ENCODE measurements at regions of chrX and their contacts with region 1.

Region 1: DNA sequence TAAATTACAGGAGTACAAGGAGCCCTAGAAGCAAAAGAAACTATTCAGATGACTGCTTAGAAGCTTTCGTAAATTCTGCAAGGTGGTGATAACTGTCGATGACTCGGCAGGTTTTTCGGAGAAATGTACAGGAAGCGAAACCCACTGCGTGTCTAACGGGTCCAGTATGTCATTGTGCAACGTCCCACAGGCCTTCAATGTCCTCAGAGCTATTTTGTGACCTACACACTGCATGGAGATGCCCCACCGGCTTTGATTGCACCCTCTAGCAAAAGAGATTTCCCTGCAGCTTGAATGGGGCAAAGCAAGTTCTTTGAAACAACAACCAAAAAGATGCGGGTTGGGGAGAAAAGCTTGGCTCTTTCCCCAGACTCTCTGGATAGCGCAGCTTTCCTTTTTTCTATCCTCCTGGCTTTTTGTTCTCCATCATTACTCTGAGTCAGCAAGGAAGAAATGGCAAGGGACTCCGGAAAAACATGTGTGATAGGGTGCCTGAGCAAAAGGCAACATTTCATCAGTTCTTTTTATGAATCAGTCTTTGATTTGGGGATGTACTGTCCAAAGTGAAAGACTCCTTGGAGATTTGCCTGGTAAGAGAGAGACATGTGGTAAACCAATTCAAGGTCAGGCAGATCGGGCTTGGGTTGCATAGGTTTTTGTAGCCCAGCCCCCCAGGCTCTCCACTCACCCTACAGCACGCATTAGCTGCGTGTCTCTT is 112.0 kb upstream of the TBL1X start:
- DNase-seq: no peak
- ATAC-seq: peak in 4 of 8 donors; percentile 43 to 66 (median 55)
- H3K4me3 ChIP-seq: peak overlapping the region in 1 of 10 donors; percentile 8
- H3K27ac ChIP-seq: peak overlapping the region in 1 of 10 donors; percentile 67
- H3K4me1 ChIP-seq: peaks cover 0 to 38% (median 0%) of the 10 kb centered on the region in 9 donors
- H3K27me3 ChIP-seq: no peaks in the 10 kb centered on the region
- CTCF ChIP-seq: no peak

Region 2: DNA sequence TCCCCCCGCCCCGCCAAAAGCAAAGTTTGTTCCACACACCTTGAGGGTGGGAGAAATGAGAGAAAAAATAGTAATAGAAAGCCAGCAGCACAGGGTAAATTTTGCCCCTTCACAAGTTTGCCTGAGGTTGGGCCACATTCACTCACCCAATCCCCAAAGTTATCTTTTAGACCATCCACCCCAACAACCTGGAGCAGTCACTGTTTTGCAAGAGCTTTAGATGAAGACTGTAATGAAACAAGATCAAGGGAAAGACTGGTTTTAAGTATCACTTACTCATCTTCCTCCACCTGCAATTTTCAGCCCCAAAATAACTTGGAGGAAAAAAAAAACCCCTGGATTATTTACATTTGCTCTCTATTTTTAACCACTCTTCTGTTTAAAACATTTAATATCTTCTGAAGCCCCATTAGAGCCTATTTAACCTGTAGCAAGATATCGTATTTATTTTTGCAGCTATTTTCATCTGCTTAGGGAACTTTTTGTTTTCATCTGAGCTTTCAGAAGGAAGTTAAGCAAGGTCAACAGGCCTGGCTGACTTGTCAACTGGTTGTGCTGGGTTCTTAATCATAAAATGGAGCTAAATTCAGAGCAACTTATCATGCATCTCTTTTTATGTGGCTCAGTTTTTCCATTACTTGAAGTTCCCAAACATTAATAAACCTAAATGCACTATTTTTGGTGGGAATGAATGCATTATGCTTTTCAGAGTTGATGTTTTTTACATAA is 87.4 kb after region 1 on chrX:
- intact Hi-C with region 1: loop called in 1 of 10 experiments (anchors 10 kb)
- DNase-seq: no peak
- ATAC-seq: peak in 1 of 8 donors; percentile 19
- H3K4me3 ChIP-seq: no peak overlapping the region
- H3K27ac ChIP-seq: no peak overlapping the region
- H3K4me1 ChIP-seq: peaks cover 0 to 10% (median 0%) of the 10 kb centered on the region in 9 donors
- H3K27me3 ChIP-seq: peaks cover 0 to 28% (median 0%) of the 10 kb centered on the region in 7 donors
- CTCF ChIP-seq: no peak

Region 3: DNA sequence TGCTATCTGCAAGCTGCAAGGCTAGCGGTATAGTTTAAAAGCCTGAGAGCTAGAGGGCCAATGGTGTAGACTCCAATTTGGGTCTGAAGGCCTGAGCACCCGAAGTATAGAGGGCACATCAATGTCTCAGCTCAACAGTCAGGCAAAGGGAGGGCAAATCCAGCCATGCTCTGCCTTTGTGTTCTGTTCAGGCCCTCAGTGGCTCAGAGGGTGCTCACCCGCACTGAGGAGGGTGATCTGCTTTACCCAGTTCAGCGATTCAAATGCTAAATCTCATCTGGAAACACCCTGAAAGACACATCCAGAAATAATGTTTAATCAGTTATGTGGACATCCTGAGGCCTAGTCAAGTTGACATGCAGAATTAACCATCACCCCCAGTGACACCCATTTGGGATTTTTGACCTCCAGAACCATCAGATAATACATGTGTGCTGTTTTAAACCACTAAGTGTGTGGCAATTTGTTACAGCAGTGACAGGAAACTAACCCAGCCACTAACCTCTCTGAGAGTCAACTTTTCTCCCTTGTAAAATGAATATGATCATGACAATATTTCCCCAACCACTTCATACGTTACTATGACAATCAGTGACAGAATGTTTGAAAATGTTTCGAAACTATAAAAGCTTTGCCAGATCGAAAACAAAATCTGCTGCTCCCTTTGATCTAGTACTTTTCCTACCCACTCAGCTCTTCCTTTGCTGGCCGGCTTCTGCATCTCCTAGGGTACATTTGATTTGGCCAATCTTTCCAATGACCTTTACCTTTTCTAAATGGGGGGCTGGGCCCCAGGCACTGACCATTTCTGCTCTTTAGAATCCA is 103.6 kb after region 1 on chrX:
- intact Hi-C with region 1: loop called in 3 of 10 experiments (anchors 10 kb)
- DNase-seq: no peak
- ATAC-seq: no peak
- H3K4me3 ChIP-seq: no peak overlapping the region
- H3K27ac ChIP-seq: peak overlapping the region in 1 of 10 donors; percentile 36
- H3K4me1 ChIP-seq: peaks cover 0 to 5% (median 0%) of the 10 kb centered on the region in 9 donors
- H3K27me3 ChIP-seq: peaks cover 0 to 19% (median 0%) of the 10 kb centered on the region in 7 donors
- CTCF ChIP-seq: no peak

Measured in heart right ventricle (tissue), 16 donors.